Stomach (tissue), 19 donors: ENCODE measurements at regions of chr13 and their contacts with region 1.

Region 1: DNA sequence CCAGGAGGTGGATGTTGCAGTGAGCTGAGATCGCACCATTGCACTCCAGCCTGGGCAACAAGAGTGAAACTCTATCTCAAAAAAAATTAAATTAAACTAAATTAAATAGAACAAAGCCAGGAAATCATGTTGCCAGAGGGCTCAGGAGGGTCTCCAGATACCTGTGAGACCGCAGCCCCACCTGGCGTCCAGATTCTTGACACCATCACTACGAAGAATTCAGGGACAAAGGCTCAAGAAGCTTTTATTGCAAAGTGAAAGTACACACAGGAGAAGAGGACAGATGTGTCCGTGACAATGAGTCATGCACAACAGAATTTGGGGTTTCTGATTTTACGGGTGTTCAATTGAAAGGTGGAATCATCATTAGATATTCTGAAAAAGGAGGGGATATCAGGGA is 76.6 kb downstream of the STOML3 start:
- DNase-seq: no peak
- H3K4me3 ChIP-seq: no peak overlapping the region
- H3K27ac ChIP-seq: no peak overlapping the region
- H3K4me1 ChIP-seq: peaks cover 0 to 9% (median 0%) of the 10 kb centered on the region in 4 donors
- H3K27me3 ChIP-seq: no peaks in the 10 kb centered on the region
- CTCF ChIP-seq: no peak
- EP300 ChIP-seq: no peak
- POLR2A ChIP-seq: no peak

Region 2: GRCh38 chr13:38686577-38687245 is 227.4 kb before region 1 on chr13 and contains the start of gene FREM2:
- intact Hi-C with region 1: loop called (anchors 10 kb)
- DNase-seq: peak; percentile 57 to 94
- H3K4me3 ChIP-seq: peak within 1 kb of the TSS; percentile 52 to 76 (median 54)
- H3K27ac ChIP-seq: peak within 1 kb of the TSS in 1 of 5 donors; percentile 1
- H3K4me1 ChIP-seq: peaks cover 6 to 28% (median 21%) of the 10 kb centered on the region in 4 donors
- H3K27me3 ChIP-seq: peaks cover 0 to 31% (median 15%) of the 10 kb centered on the region in 3 donors
- CTCF ChIP-seq: no peak
- EP300 ChIP-seq: no peak
- POLR2A ChIP-seq: no peak
- total RNA-seq, gene FREM2: 0.58 to 18.0 (median 2.0) TPM